GM10248 (cell line): ENCODE measurements at regions of chr1 and their contacts with region 1.

Region 1: DNA sequence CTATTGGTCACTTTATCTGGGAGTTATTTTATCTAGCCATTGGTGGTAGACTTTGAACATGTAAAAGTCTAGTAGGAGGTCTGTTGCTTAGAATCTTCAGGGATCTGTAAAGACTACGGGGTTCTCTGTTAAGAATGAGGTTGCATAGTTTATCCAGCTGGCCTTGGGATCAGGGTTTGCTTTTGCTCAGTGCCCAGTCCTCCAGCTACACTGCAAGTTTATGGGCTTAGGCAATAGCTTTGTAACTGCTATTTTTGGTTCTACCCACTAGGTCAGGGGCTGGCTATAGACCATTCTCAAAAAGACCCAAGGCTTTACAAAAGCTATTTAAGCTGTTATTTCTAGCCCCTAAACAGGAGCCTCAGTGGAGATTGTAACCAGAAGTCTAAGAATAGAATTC is 9.8 kb downstream of the SH3GLB1 start:
- DNase-seq: no peak
- CTCF ChIP-seq: no peak

Region 2: GRCh38 chr1:86733340-86733739 is 19.2 kb after region 1 on chr1:
- CTCF ChIA-PET with region 1: interaction called, 19 read pairs
- POLR2A ChIA-PET with region 1: no interaction called
- DNase-seq: no peak
- CTCF ChIP-seq: no peak